Activated T-helper 2 cell treated with anti-CD3 and anti-CD28 coated beads, Interferon-gamma antibody, Interleukin-2, Interleukin-4, amounts not matched to agents 10 μg/mL and 5 μg/mL and 100 μg/mL, durations not matched to agents 14 hours and 24 hours and 36 hours (primary cell): ENCODE measurements at regions of chr13 and their contacts with region 1.

Region 1: GRCh38 chr13:38349390-38350113 is at the start of gene UFM1:
- DNase-seq: peak; percentile 82
- H3K4me3 Mint-ChIP-seq: peak within 1 kb of the TSS; percentile 100
- H3K27ac Mint-ChIP-seq: peak within 1 kb of the TSS; percentile 99
- H3K4me1 Mint-ChIP-seq: peaks cover 36% of the 10 kb centered on the region
- H3K27me3 Mint-ChIP-seq: no peaks in the 10 kb centered on the region
- total RNA-seq, gene UFM1: 68.2 and 73.4 TPM in 2 replicates

Region 2: GRCh38 chr13:36431654-36432511 is 1917.7 kb before region 1 on chr13 and contains the start of gene CCNA1:
- intact Hi-C with region 1: loop called (anchors 10 kb)
- DNase-seq: peak; percentile 32
- H3K4me3 Mint-ChIP-seq: peak within 1 kb of the TSS; percentile 74
- H3K27ac Mint-ChIP-seq: no peak within 1 kb of the TSS
- H3K4me1 Mint-ChIP-seq: peaks cover 27% of the 10 kb centered on the region
- H3K27me3 Mint-ChIP-seq: peaks cover 40% of the 10 kb centered on the region
- total RNA-seq, gene CCNA1: 4.3 and 5.0 TPM in 2 replicates

Region 3: GRCh38 chr13:36818804-36819738 is 1530.5 kb before region 1 on chr13 and contains the start of gene RFXAP:
- intact Hi-C with region 1: loop called (anchors 1 kb)
- DNase-seq: peak; percentile 88
- H3K4me3 Mint-ChIP-seq: peak within 1 kb of the TSS; percentile 90
- H3K27ac Mint-ChIP-seq: peak within 1 kb of the TSS; percentile 89
- H3K4me1 Mint-ChIP-seq: peaks cover 43% of the 10 kb centered on the region
- H3K27me3 Mint-ChIP-seq: peaks cover 18% of the 10 kb centered on the region
- total RNA-seq, gene RFXAP: 10.6 and 13.5 TPM in 2 replicates

Region 4: GRCh38 chr13:36999054-36999714 is 1350.4 kb before region 1 on chr13 and contains the start of gene ALG5:
- intact Hi-C with region 1: loop called (anchors 1 kb)
- DNase-seq: peak; percentile 93
- H3K4me3 Mint-ChIP-seq: peak within 1 kb of the TSS; percentile 100
- H3K27ac Mint-ChIP-seq: peak within 1 kb of the TSS; percentile 100
- H3K4me1 Mint-ChIP-seq: peaks cover 37% of the 10 kb centered on the region
- H3K27me3 Mint-ChIP-seq: no peaks in the 10 kb centered on the region
- total RNA-seq, gene ALG5: 45.6 and 49.8 TPM in 2 replicates

Region 5: DNA sequence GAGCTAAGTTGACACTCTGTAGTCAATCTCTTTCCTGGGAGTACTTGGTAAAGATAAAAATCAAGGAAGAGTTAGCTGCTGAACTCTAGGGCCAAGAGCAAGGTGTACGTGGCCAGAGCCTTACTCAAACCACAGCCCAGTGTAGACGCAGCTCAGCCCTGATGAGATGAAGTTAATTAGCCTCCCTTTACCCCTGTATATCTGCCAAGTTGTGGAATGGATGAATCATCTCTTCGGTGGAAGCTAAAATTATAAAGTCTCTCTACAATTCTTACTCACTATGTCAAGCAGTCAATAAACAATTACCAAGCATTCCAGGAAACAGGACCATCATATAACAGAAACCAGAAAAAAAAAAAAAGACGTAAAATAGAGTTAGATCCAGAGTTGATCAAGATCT is 146.8 kb before region 1 on chr13:
- intact Hi-C with region 1: loop called (anchors 2 kb)
- DNase-seq: no peak
- H3K4me3 Mint-ChIP-seq: no peak overlapping the region
- H3K27ac Mint-ChIP-seq: peak overlapping the region; percentile 50
- H3K4me1 Mint-ChIP-seq: peaks cover 16% of the 10 kb centered on the region
- H3K27me3 Mint-ChIP-seq: no peaks in the 10 kb centered on the region

Region 6: DNA sequence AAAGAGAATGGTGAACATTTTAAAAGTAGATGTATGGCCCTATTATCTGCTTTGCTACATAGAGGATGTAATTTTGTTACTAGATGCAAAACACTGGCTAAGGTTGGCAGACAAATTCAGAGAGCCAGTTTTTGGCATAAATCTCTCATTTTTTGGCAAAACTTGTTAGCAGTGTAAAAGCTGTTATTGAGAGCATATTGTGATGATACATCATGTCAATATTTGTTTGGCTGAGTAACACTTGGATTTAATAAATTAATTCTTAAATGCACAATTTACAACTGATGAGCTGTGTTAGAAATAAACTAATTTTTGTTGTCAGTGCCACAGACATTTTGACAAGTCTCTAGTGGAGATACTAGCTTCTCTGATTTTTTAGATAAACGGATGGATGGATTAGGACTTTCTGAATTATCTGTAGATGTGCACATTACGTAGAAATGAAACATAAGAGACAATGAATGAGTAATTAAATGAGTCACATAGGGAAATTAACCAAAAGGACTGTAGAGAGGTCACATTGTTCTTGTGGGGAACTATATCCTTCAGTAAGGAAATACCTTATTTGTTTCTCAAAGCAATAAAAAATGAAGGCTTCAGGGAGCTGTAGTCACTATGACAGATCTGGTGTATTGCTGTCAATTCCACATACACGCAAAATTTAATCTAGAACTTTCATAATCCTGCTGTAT is 17.5 kb after region 1 on chr13:
- intact Hi-C with region 1: no loop called
- DNase-seq: no peak
- H3K4me3 Mint-ChIP-seq: no peak overlapping the region
- H3K27ac Mint-ChIP-seq: no peak overlapping the region
- H3K4me1 Mint-ChIP-seq: peaks cover 5% of the 10 kb centered on the region
- H3K27me3 Mint-ChIP-seq: no peaks in the 10 kb centered on the region

Region 7: GRCh38 chr13:38417727-38418126 is 68.2 kb after region 1 on chr13:
- intact Hi-C with region 1: loop called (anchors 5 kb)
- DNase-seq: no peak
- H3K4me3 Mint-ChIP-seq: no peak overlapping the region
- H3K27ac Mint-ChIP-seq: no peak overlapping the region
- H3K4me1 Mint-ChIP-seq: peaks cover 4% of the 10 kb centered on the region
- H3K27me3 Mint-ChIP-seq: peaks cover 3% of the 10 kb centered on the region

Region 8: DNA sequence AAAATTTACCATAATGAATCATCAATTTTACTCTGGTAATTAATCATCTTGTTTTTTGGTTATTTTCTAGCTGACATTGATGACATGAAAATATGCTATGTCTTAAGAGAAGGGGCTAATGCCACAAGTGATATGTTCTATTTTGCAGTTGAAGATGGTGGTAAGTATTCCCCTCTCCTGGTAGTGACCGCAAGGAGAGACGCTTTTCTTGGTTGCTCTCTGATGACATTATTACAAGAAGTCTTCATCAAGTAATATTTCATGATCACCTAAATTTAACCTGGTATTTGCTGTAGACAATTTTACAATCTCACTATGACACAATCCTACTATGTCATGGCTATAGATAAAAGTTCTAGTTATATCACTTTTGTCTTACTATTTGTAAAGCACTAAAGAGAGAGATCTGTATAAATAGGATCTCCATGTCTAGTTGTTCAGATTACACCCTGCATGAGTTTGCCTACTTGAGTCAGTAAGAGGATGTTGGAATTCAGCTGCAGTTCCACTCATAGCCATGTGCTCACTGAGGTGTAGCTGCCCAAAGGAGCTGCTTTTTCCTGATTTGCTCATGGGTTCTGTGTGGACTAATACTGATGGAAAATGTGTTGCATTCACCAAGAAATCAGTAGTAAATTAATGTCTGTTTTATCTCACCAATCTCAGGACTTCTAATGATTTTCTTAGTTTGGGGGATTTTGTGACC is 348.2 kb after region 1 on chr13:
- intact Hi-C with region 1: no loop called
- DNase-seq: no peak
- H3K4me3 Mint-ChIP-seq: no peak overlapping the region
- H3K27ac Mint-ChIP-seq: no peak overlapping the region
- H3K4me1 Mint-ChIP-seq: no peaks in the 10 kb centered on the region
- H3K27me3 Mint-ChIP-seq: no peaks in the 10 kb centered on the region

Region 9: DNA sequence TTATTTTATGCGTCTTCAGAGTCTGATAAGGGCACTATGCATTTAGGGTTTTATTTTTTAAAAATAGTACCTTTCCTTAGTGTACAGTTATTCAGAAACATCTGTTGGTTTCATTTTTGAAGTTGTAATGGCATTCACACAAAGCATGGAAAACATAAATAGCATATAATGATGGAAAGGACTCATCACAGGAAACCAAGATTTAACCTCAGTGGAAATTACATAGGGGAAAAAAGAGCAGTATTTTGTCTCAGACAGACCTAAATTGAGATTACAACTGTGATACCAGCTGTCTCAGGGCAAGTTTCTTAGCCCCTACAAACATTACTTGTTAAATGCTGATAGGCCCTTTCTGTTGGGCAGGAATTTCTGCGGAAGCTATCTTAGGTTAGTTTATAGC is 745.9 kb after region 1 on chr13:
- intact Hi-C with region 1: loop called (anchors 10 kb)
- DNase-seq: no peak
- H3K4me3 Mint-ChIP-seq: peak overlapping the region; percentile 31
- H3K27ac Mint-ChIP-seq: peak overlapping the region; percentile 94
- H3K4me1 Mint-ChIP-seq: peaks cover 35% of the 10 kb centered on the region
- H3K27me3 Mint-ChIP-seq: no peaks in the 10 kb centered on the region